Thyroid gland (tissue), 4 donors: ENCODE measurements at regions of chr5 and their contacts with region 1.

Region 1: GRCh38 chr5:17132444-17133083 is 84.9 kb upstream of the BASP1 start:
- DNase-seq: no peak
- H3K4me3 ChIP-seq: no peak overlapping the region
- H3K27ac ChIP-seq: no peak overlapping the region
- H3K4me1 ChIP-seq: peaks cover 6 to 11% of the 10 kb centered on the region in 2 donors
- H3K27me3 ChIP-seq: no peaks in the 10 kb centered on the region
- CTCF ChIP-seq: peak; percentile 40 to 69 (median 60)
- POLR2A ChIP-seq: no peak

Region 2: DNA sequence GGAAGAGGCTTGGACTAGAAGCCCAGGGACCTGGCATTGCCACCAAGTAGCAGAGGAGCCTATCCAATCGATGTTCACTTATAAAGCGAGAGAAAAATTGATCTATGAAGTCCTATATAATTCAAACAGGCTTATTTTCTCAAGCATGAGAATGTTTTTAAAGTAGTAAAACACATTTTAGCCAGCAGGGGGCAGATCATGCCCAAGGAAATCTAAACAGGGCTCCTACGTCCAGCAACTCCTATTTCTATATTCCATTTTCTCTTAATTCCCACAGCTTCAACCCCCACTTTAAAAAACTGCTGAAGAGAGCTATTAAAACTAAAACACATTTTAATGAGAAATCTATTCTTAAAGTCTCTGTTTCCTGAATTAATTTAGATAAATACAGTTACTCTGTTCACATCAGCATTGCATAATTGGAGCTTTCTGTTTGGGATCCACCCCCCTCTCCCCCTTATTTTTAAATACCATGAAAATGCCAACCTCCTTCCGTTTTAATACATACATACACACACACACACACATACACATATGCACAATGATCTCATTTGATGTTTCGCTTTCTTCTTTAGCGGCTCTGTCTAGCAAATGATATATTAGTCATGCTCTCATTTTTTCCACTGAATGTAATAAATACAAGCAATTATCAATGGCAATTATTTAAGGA is 341.4 kb before region 1 on chr5:
- intact Hi-C with region 1: loop called (anchors 10 kb)
- DNase-seq: peak in 1 of 2 donors; percentile 29
- H3K4me3 ChIP-seq: no peak overlapping the region
- H3K27ac ChIP-seq: no peak overlapping the region
- H3K4me1 ChIP-seq: peaks cover 0 to 7% of the 10 kb centered on the region in 2 donors
- H3K27me3 ChIP-seq: no peaks in the 10 kb centered on the region
- CTCF ChIP-seq: peak; percentile 60 to 82 (median 66)
- POLR2A ChIP-seq: no peak

Region 3: DNA sequence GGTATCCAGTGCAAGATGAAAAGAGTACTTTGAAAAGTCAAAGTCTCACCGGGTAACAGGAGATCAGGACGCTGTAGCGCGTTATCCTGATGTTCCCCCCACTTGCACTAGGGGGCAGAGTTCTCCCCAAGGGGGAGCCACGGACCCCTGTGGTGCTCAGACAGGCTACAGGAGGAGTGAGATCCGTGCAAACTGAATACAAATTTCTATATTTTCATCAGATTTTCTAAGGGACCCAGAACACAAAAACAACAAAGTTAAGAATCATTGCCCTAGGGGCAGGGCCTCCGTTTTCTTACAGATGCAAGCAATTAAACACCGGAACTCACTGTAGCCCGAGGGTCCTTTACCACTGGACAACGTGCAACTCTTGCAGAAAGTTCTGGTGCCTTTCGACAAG is 198.4 kb before region 1 on chr5:
- intact Hi-C with region 1: loop called (anchors 10 kb)
- DNase-seq: peak; percentile 74 to 81
- H3K4me3 ChIP-seq: peak overlapping the region in 2 of 3 donors; percentile 42 to 83
- H3K27ac ChIP-seq: peak overlapping the region in 2 of 3 donors; percentile 88 to 94
- H3K4me1 ChIP-seq: peaks cover 33 to 36% of the 10 kb centered on the region in 2 donors
- H3K27me3 ChIP-seq: no peaks in the 10 kb centered on the region
- CTCF ChIP-seq: peak; percentile 68 to 86 (median 82)
- POLR2A ChIP-seq: no peak

Region 4: DNA sequence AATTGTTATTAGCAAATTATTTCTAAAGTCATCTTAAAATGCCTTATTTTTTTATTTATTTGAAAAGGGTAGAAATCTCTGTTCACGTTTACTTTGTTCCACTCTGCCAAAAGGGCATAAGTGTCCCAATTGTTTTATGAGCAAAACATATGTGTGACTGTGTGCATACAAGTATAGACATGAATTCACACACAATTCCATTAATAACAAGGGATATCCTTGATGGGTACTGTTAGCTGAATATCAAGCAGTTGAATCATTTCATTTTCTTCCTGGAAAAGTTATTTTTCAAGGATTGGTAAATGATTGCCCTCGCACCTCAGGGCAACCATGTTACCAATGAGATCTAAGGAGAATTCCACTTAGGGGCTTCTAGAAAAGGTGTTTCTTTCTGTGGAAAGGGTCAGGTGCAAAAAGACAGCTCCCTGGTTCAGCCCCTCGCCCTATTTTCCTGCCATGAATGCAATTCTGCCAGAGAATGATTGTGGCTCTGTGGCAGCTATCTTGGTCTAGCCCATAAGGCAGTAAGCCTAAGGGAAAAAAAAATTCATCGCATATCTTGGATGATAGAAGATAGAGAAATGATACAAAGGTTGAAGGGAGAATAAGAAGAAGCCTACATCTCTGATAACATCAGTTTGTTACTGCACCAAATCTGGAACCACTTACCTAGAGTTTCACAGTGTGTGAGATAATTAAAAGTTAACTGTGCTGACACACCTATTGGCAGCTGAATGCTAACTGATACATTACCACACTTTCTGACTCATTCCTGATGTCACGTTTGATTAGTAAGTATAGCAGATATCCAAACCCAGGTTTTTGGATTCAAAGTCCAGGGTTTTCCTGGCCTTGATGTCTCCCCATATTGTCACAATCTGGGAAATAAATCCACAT is 273.7 kb after region 1 on chr5:
- intact Hi-C with region 1: no loop called
- DNase-seq: no peak
- H3K4me3 ChIP-seq: no peak overlapping the region
- H3K27ac ChIP-seq: no peak overlapping the region
- H3K4me1 ChIP-seq: peaks cover 0 to 4% of the 10 kb centered on the region in 2 donors
- H3K27me3 ChIP-seq: no peaks in the 10 kb centered on the region
- CTCF ChIP-seq: no peak
- POLR2A ChIP-seq: no peak